Calu3 (cell line): ENCODE measurements at regions of chr7 and their contacts with region 1.

Region 1: GRCh38 chr7:36600869-36601530 is 123.3 kb downstream of the AOAH start:
- DNase-seq: peak; percentile 54
- H3K4me3 Mint-ChIP-seq: no peak overlapping the region
- H3K27ac Mint-ChIP-seq: no peak overlapping the region
- H3K4me1 Mint-ChIP-seq: peaks cover 39% of the 10 kb centered on the region
- H3K27me3 Mint-ChIP-seq: peaks cover 1% of the 10 kb centered on the region
- CTCF ChIP-seq: no peak

Region 2: DNA sequence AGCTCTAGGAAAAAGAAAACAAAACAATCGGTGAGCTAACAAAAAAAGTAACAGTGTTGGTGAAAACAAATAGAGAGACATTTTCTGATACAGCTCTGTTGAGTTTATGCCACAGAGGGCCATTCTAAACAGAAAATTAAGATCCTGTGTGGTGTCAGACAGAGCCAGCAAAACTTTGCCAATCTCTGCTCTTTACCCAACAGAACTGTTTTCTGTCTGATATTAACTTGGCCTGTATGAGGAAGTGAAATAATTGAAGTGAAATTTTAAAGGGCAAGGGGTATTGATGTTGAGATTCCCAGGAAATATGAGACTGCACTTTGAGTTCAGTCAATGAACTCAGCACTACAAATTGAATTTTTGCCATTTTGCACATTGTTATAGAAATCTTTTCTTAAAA is 22.2 kb after region 1 on chr7:
- CTCF ChIA-PET with region 1: interaction called, 3 read pairs
- intact Hi-C with region 1: loop called (anchors 2 kb)
- DNase-seq: no peak
- H3K4me3 Mint-ChIP-seq: peak overlapping the region; percentile 10
- H3K27ac Mint-ChIP-seq: peak overlapping the region; percentile 27
- H3K4me1 Mint-ChIP-seq: peaks cover 12% of the 10 kb centered on the region
- H3K27me3 Mint-ChIP-seq: peaks cover 25% of the 10 kb centered on the region
- CTCF ChIP-seq: no peak

Region 3: GRCh38 chr7:36670585-36671431 is 69.8 kb after region 1 on chr7:
- CTCF ChIA-PET with region 1: no interaction called
- intact Hi-C with region 1: loop called (anchors 5 kb)
- DNase-seq: peak; percentile 83
- H3K4me3 Mint-ChIP-seq: no peak overlapping the region
- H3K27ac Mint-ChIP-seq: no peak overlapping the region
- H3K4me1 Mint-ChIP-seq: peaks cover 26% of the 10 kb centered on the region
- H3K27me3 Mint-ChIP-seq: no peaks in the 10 kb centered on the region
- CTCF ChIP-seq: peak; percentile 94